ENCODE measurements at regions of chr1 and their contacts with region 1.

Region 1: GRCh38 chr1:231091831-231092301 is 51.8 kb upstream of the FAM89A start:
- DNase-seq: no peak
- ATAC-seq: peak; percentile 83
- H3K4me3 ChIP-seq: no peak overlapping the region
- H3K27ac ChIP-seq: no peak overlapping the region
- H3K4me1 ChIP-seq: no peaks in the 10 kb centered on the region
- H3K27me3 ChIP-seq: no peaks in the 10 kb centered on the region; a peak in 1 of 4 replicates
- CTCF ChIP-seq: peak; percentile 73 to 92 (median 85)
- EP300 ChIP-seq: no peak
- POLR2A ChIP-seq: no peak
- RAD21 ChIP-seq: peak; percentile 51

Region 2: DNA sequence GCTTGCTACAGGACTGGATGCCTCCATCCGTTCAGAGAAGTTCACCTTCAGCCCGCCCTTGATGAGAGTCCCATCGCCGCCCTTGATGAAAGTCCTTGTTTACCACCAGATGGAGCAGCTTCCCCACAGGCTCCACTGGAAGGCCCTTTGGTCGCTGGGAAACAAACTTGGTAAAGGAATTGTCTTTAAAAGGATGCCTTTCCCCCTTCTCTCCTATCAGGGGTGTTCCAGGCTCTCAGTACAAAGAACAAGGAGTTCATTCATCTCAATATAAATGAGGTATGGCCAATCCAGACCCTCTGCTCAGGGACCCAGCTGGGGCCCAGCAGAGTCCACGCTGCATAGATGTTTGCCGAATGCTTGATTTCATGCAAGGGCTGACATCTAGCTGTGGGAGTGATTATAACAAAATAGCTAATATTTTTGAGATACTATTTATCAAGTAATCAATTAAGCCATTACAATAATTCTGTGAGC is 293.9 kb before region 1 on chr1:
- CTCF ChIA-PET with region 1: no interaction called
- POLR2A ChIA-PET with region 1: no interaction called
- RAD21 ChIA-PET with region 1: no interaction called
- SMC1A ChIA-PET with region 1: no interaction called
- in situ Hi-C with region 1: no loop called
- intact Hi-C with region 1: loop called (anchors 10 kb)
- DNase-seq: no peak
- ATAC-seq: peak; percentile 42; the same call in 2 of the 3 replicates
- H3K4me3 ChIP-seq: no peak overlapping the region
- H3K27ac ChIP-seq: no peak overlapping the region
- H3K4me1 ChIP-seq: no peaks in the 10 kb centered on the region
- H3K27me3 ChIP-seq: no peaks in the 10 kb centered on the region; a peak in 1 of 4 replicates
- CTCF ChIP-seq: peak; percentile 13 to 36 (median 24); a peak in 4 of 6 replicates
- EP300 ChIP-seq: no peak
- POLR2A ChIP-seq: no peak
- RAD21 ChIP-seq: peak; percentile 53

Region 3: DNA sequence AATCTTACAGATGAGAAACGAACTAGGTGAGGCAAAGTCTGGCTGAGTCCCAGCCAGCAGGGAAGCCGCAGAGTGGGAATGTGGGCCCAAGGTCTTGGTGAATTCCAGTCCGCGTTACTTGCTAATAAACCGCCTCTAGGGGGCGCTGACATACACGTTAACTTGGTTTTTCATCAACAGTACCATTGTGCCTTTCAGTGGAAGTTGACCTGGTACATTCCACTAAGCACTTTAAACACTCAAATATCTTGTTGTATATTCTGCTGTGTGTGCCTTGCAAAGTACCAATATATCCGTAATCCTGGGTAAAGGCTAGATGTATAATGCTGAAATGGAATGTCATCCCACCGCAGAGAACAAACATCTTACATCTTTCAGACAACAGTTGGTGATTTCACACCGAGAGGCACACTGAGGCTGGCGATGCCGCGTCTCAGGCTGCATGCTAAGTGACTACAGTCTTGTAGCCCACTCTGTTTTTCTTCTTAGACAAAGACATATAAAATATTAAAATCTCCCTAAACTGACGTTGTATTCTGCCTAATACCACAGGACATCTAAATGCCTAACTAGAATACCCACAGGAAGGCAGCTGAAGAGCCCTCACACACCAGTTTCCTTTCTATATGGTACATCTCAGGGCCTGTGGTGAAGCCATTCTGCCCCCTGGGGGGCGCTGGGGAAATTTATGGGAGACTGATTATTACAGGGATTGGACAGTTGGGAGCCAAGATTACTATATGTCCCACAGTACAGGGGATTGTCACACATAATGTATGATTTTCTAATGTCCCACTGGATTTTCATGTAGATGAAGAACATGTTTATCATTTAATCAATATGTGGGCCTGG is 174.4 kb before region 1 on chr1:
- CTCF ChIA-PET with region 1: interaction called, 27 read pairs
- POLR2A ChIA-PET with region 1: no interaction called
- RAD21 ChIA-PET with region 1: interaction called, 3 read pairs
- SMC1A ChIA-PET with region 1: interaction called, 12 read pairs
- in situ Hi-C with region 1: loop called (anchors 10 kb)
- intact Hi-C with region 1: loop called (anchors 1 kb)
- DNase-seq: peak; percentile 17
- ATAC-seq: peak; percentile 95
- H3K4me3 ChIP-seq: no peak overlapping the region
- H3K27ac ChIP-seq: no peak overlapping the region
- H3K4me1 ChIP-seq: no peaks in the 10 kb centered on the region
- H3K27me3 ChIP-seq: no peaks in the 10 kb centered on the region
- CTCF ChIP-seq: peak; percentile 66 to 80 (median 78)
- EP300 ChIP-seq: no peak
- POLR2A ChIP-seq: no peak
- RAD21 ChIP-seq: peak; percentile 79

Region 4: DNA sequence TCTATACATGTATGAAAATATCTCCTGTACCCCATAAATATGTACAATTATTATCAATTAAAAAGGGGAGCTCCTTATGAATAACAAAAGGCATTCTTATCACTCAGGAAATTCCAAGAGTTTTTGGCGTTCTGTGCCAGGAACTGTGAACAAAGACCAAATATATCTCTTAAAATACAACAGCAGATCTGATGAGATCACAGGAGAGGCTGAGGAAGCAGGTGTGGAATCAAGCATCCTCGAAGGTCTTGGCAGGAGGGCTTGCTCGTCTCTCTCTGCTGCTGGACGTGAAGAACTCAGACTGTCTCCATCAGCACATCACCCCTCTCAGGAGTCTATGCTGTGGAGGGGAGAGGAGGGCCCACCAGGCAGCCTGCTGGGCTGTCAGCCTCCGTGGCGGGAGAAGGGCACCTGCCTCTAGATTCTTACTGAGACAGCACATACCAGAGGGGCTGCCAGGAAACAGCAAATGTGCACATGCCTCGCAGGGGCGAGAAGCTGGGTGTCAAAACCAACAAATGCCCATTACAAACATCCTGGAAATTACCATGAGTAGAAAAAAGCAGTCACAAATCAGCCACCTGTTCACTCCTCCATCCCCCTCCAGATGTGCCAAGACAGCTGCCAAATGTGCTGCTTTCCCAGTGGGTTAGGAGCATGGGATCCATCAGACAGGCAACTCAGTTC is 21.0 kb before region 1 on chr1:
- CTCF ChIA-PET with region 1: interaction called, 10 read pairs
- POLR2A ChIA-PET with region 1: no interaction called
- RAD21 ChIA-PET with region 1: no interaction called
- SMC1A ChIA-PET with region 1: interaction called, 3 read pairs
- in situ Hi-C with region 1: no loop called
- intact Hi-C with region 1: no loop called
- DNase-seq: no peak
- ATAC-seq: no peak
- H3K4me3 ChIP-seq: no peak overlapping the region
- H3K27ac ChIP-seq: no peak overlapping the region
- H3K4me1 ChIP-seq: no peaks in the 10 kb centered on the region
- H3K27me3 ChIP-seq: peaks cover 0 to 2% of the 10 kb centered on the region in 2 experiments; a peak in 1 of 4 replicates
- CTCF ChIP-seq: no peak
- EP300 ChIP-seq: no peak
- POLR2A ChIP-seq: no peak
- RAD21 ChIP-seq: no peak

Region 5: DNA sequence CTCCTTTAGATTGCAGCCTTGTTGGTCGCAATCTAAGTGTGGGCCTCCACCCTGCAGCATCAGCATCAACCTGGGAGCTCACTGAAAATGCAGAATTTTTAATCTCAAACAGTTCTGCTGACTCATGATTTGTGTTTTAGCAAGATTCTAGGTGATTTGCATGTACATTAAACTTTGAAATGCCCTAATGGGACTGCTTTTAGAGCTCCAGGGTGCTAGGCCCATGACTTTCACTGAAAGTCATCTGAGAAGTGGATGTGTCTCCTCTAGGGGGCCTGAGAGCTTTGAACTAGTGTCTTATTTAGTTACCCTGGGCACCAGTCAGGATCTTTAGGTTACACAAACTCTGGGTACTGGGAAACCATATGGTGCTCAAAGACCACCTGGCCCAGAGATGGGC is 79.0 kb after region 1 on chr1:
- CTCF ChIA-PET with region 1: no interaction called
- POLR2A ChIA-PET with region 1: no interaction called
- RAD21 ChIA-PET with region 1: no interaction called
- SMC1A ChIA-PET with region 1: no interaction called
- in situ Hi-C with region 1: no loop called
- intact Hi-C with region 1: no loop called
- DNase-seq: no peak
- ATAC-seq: peak; percentile 42; the same call in 2 of the 3 replicates
- H3K4me3 ChIP-seq: no peak overlapping the region
- H3K27ac ChIP-seq: no peak overlapping the region
- H3K4me1 ChIP-seq: no peaks in the 10 kb centered on the region
- H3K27me3 ChIP-seq: peaks cover 1 to 8% of the 10 kb centered on the region in 2 experiments; a peak in 3 of 4 replicates
- CTCF ChIP-seq: peak in 2 of 3 experiments; percentile 14 to 38; a peak in 2 of 6 replicates
- EP300 ChIP-seq: no peak
- POLR2A ChIP-seq: no peak
- RAD21 ChIP-seq: no peak